Activated CD8-positive, alpha-beta memory T cell treated with anti-CD3 and anti-CD28 coated beads, Interleukin-2, amount 10 ng/mL, durations not matched to agents 7 days and 5 days (primary cell): ENCODE measurements at regions of chr1 and their contacts with region 1.

Region 1: DNA sequence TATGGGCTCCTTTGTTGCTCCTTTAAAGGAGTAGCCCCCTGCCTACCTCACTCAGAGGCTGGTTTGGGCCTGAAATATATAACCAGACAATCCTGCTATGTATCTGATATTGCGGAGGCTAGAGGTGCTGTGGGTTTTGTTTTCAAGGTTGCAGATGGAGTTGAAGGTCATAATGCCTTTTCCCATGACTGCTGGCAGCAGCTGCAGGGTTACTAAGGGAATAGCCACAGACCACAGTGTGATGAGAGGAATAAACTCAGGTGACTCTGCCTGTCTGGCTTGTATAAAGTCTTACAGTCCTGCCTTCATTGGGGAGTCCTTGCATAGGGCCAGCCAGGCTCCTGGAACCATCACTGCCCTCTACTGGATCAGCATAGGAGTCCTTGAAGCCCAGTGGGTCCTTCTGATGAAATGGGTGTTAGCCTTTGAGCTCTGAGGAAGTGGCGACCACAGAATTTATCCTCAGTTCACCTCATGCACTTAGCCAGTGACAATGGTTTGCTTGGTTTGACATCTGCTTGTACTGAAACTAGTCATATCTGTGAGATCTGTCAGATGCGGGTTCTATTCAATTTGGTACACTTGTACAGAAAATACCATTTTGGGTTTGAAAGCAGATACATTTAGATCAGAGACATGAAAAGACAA is 174.4 kb upstream of the HMCN1 start:
- DNase-seq: peak; percentile 93
- ATAC-seq: peak; percentile 94
- H3K4me3 Mint-ChIP-seq: peak overlapping the region; percentile 48
- H3K27ac Mint-ChIP-seq: peak overlapping the region; percentile 94
- H3K4me1 Mint-ChIP-seq: peaks cover 39% of the 10 kb centered on the region
- H3K27me3 Mint-ChIP-seq: no peaks in the 10 kb centered on the region

Region 2: DNA sequence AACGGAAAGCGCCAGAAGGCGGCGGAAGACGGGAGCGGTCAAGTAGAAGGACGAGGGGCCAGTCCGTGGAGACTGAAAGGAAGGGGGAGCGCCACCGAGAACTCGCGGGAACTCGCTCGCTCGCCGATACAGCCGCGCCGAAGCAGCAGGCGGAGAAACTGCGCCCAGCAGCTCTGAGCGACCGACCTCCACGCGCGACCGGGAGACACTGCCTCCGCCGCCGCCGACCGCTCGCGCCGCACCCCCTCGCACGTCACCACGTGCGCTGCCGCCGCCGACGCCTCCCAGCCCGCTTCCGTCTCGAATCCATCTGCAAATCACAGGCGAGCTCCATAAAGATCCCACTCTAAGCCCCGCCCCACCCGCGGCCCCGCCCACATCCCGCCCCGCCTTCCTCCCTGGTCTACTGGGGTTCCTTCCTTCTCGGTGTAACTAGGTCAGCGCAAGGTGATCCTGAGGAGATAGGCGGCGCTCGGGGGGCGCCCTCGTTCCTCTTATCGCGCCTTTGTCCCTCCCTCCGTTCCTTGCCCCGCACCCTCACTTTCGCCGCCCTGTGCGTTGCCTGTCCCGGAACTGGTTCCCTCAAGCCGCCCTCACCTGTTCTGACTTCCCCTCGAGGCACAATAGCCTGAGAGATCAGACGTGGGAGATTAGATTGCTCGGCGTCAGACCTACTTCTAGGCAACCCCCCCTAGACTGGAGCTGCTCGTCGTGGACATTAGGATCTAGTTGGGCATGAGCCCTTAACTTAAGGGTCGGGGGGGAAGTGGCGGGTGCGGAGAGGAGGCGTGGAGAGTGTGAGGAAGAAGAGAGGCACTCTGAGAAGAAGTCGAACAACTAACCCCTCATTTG is 242.5 kb before region 1 on chr1 and contains the start of gene IVNS1ABP:
- CTCF ChIA-PET with region 1: interaction called, 37 read pairs
- DNase-seq: peak; percentile 97
- ATAC-seq: peak; percentile 75
- H3K4me3 Mint-ChIP-seq: peak within 1 kb of the TSS; percentile 99
- H3K27ac Mint-ChIP-seq: peak within 1 kb of the TSS; percentile 97
- H3K4me1 Mint-ChIP-seq: peaks cover 44% of the 10 kb centered on the region
- H3K27me3 Mint-ChIP-seq: no peaks in the 10 kb centered on the region
- total RNA-seq, gene IVNS1ABP: 251 to 509 TPM

Region 3: DNA sequence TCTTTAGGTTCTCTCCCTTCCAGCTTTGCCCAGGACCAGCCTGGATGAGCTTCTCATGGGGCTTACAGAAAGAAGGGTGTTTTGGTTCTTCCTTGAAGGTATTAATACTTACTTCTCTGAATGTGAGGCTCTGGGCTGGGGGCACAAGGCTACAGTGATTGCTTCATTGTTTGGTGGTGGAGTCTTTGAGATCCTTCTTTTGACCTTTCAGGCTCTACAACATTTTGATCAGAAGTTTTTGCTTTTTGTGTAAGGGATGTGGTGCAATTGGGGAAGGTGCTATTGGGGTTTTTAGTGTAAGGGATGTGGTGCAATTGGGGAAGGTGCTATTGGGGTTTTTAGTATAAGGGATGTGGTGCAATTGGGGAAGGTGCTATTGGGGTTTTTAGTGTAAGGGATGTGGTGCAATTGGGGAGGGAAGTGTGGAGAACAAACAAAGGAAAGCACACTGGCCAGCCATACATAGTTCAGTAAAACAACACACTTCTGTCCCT is 139.2 kb before region 1 on chr1:
- CTCF ChIA-PET with region 1: interaction called, 13 read pairs
- DNase-seq: peak; percentile 81
- ATAC-seq: peak; percentile 88
- H3K4me3 Mint-ChIP-seq: peak overlapping the region; percentile 56
- H3K27ac Mint-ChIP-seq: peak overlapping the region; percentile 96
- H3K4me1 Mint-ChIP-seq: peaks cover 73% of the 10 kb centered on the region
- H3K27me3 Mint-ChIP-seq: no peaks in the 10 kb centered on the region

Region 4: GRCh38 chr1:185512442-185512841 is 47.4 kb before region 1 on chr1:
- CTCF ChIA-PET with region 1: no interaction called
- DNase-seq: no peak
- ATAC-seq: no peak
- H3K4me3 Mint-ChIP-seq: no peak overlapping the region
- H3K27ac Mint-ChIP-seq: no peak overlapping the region
- H3K4me1 Mint-ChIP-seq: peaks cover 7% of the 10 kb centered on the region
- H3K27me3 Mint-ChIP-seq: no peaks in the 10 kb centered on the region

Region 5: GRCh38 chr1:185595835-185596667 is 36.2 kb after region 1 on chr1:
- CTCF ChIA-PET with region 1: interaction called, 14 read pairs
- DNase-seq: peak; percentile 64
- ATAC-seq: peak; percentile 53
- H3K4me3 Mint-ChIP-seq: no peak overlapping the region
- H3K27ac Mint-ChIP-seq: no peak overlapping the region
- H3K4me1 Mint-ChIP-seq: peaks cover 23% of the 10 kb centered on the region
- H3K27me3 Mint-ChIP-seq: no peaks in the 10 kb centered on the region

Region 6: GRCh38 chr1:185670187-185670627 is 110.4 kb after region 1 on chr1:
- CTCF ChIA-PET with region 1: interaction called, 22 read pairs
- DNase-seq: peak; percentile 77
- ATAC-seq: peak; percentile 89
- H3K4me3 Mint-ChIP-seq: no peak overlapping the region
- H3K27ac Mint-ChIP-seq: no peak overlapping the region
- H3K4me1 Mint-ChIP-seq: peaks cover 45% of the 10 kb centered on the region
- H3K27me3 Mint-ChIP-seq: no peaks in the 10 kb centered on the region